PC-3 (cell line): ENCODE measurements at regions of chr2 and their contacts with region 1.

Region 1: GRCh38 chr2:214410918-214411554 is at the start of gene VWC2L:
- DNase-seq: peak; percentile 87
- ATAC-seq: peak; percentile 100
- H3K4me3 ChIP-seq: no peak within 1 kb of the TSS
- H3K27ac ChIP-seq: no peak within 1 kb of the TSS
- H3K4me1 ChIP-seq: 0 out of 2 replicates have a peak, but pooled peaks cover 4% of the 10 kb centered on the region
- H3K27me3 ChIP-seq: no peaks in the 10 kb centered on the region
- CTCF ChIP-seq: no peak
- total RNA-seq, gene VWC2L: not detected in 2 replicates

Region 2: GRCh38 chr2:214076527-214076926 is 334.5 kb before region 1 on chr2:
- CTCF ChIA-PET with region 1: interaction called, 9 read pairs
- POLR2A ChIA-PET with region 1: no interaction called
- intact Hi-C with region 1: loop called (anchors 1 kb)
- DNase-seq: peak; percentile 80
- ATAC-seq: peak; percentile 81
- H3K4me3 ChIP-seq: no peak overlapping the region
- H3K27ac ChIP-seq: peak overlapping the region; percentile 48
- H3K4me1 ChIP-seq: peaks cover 27% of the 10 kb centered on the region
- H3K27me3 ChIP-seq: no peaks in the 10 kb centered on the region
- CTCF ChIP-seq: no peak

Region 3: DNA sequence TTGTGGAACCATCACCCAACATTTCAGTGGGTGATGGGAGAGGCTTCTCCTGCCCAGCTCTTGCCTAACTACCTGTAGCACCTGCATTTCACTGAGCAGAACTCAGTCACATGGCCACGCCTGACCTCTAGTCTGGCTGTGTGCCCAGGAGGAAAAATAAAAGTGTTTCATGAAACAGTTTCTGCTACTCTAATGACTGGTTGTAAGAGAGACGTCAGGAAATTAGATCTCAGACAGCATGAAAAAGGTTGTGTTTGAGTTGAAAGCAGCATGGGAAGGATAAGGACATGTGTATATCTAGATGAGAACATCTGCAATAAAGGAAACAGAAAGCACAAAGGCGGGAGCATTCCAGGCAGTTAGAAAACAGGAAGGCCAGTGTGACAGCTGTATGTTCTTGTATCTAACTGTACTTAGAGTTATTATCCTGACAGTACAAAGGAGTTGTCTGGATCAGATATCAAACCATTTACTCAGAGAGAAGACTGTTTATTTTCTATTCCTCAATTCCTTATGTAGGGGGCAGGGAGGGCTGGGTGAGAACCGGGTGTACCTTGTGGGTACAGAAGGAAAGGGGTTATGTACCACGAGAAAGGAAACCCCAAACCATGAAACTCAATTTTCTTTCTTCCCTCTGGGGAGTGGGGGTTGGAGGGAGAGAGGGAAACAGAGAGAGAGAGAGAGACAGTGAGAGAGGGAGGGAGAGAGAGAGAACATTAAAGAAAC is 307.6 kb before region 1 on chr2:
- CTCF ChIA-PET with region 1: no interaction called
- POLR2A ChIA-PET with region 1: no interaction called
- intact Hi-C with region 1: no loop called
- DNase-seq: peak; percentile 39
- ATAC-seq: no peak; the same call in 1 of the 2 replicates
- H3K4me3 ChIP-seq: no peak overlapping the region
- H3K27ac ChIP-seq: no peak overlapping the region
- H3K4me1 ChIP-seq: peaks cover 5% of the 10 kb centered on the region; the same call in 1 of the 2 replicates
- H3K27me3 ChIP-seq: no peaks in the 10 kb centered on the region
- CTCF ChIP-seq: no peak

Region 4: DNA sequence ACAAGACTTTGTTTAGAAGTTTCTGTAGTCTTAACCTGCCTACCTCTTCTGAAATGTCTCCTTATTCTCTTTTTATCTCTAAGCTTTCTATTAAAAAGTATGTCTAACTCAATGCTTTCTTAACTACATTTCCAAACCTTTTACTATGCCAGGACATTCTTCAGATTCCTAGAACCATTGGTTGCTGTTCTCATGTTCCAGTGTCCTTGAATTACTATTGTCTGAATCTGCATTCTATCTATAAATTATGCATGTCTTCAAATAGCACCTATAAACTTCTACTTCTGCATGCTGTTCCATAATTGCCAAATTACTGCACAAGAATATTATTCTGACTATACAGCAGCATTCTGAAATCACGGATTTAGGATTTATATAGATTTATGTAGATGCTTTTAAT is 166.2 kb before region 1 on chr2:
- CTCF ChIA-PET with region 1: no interaction called
- POLR2A ChIA-PET with region 1: no interaction called
- intact Hi-C with region 1: loop called (anchors 10 kb)
- DNase-seq: peak; percentile 24
- ATAC-seq: peak; percentile 23; the same call in 1 of the 2 replicates
- H3K4me3 ChIP-seq: no peak overlapping the region
- H3K27ac ChIP-seq: no peak overlapping the region
- H3K4me1 ChIP-seq: peaks cover 12% of the 10 kb centered on the region
- H3K27me3 ChIP-seq: no peaks in the 10 kb centered on the region
- CTCF ChIP-seq: no peak

Region 5: DNA sequence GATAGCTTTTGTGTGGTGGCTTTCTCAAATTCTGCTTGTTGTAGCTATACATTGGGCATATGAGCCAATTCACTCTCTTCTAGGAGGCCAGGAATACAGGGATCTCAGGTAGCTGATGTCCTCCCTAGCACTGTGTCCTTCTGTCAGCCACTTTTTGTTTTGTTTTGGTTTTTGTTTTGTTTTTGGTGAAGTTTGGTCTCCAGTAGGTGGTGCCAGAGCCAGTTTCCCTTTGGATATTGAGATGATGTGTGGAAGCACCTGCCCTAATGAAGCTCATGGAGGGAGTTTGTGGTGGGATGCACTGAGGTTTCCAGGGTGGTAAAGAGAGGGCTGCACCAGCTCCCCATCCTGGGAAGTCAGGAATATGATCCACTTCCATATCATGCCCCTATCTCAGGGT is 100.7 kb before region 1 on chr2:
- CTCF ChIA-PET with region 1: no interaction called
- POLR2A ChIA-PET with region 1: no interaction called
- intact Hi-C with region 1: loop called (anchors 5 kb)
- DNase-seq: peak; percentile 33
- ATAC-seq: peak; percentile 10; the same call in 1 of the 2 replicates
- H3K4me3 ChIP-seq: no peak overlapping the region
- H3K27ac ChIP-seq: no peak overlapping the region
- H3K4me1 ChIP-seq: peaks cover 24% of the 10 kb centered on the region
- H3K27me3 ChIP-seq: no peaks in the 10 kb centered on the region
- CTCF ChIP-seq: peak; percentile 54

Region 6: DNA sequence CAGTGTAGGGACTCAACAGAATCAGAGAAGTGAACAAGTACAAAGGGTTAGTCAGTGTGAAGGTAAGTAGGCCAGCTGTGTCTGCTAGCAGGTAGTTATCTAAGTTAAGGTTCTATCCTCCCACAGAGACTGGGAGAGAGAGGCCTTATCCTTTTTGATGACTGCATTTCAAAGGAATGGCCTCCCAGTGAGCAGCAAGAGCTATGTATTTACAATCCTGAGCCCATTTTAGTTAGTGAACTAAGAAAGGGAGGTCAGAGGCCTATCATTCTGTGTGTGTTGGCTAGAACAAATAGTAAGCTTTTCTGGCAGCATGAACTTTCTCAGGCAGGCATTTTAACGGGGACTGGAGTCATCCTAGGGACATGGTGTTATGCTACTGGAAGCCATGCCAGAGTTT is 182.7 kb after region 1 on chr2:
- CTCF ChIA-PET with region 1: interaction called, 18 read pairs
- POLR2A ChIA-PET with region 1: no interaction called
- intact Hi-C with region 1: no loop called
- DNase-seq: peak; percentile 41
- ATAC-seq: peak; percentile 64
- H3K4me3 ChIP-seq: no peak overlapping the region
- H3K27ac ChIP-seq: no peak overlapping the region
- H3K4me1 ChIP-seq: no peaks in the 10 kb centered on the region
- H3K27me3 ChIP-seq: no peaks in the 10 kb centered on the region
- CTCF ChIP-seq: no peak